ENCODE measurements at regions of chr6 and their contacts with region 1.

Region 1: GRCh38 chr6:139250296-139251044 is 41.3 kb downstream of the TXLNB start:
- DNase-seq: peak; percentile 7 to 45 (median 34)
- ATAC-seq: peak; percentile 90
- H3K4me3 ChIP-seq: no peak overlapping the region
- H3K4me3 Mint-ChIP-seq: peak overlapping the region in 6 of 10 donors; percentile 16 to 85 (median 58)
- H3K27ac ChIP-seq: no peak overlapping the region
- H3K27ac Mint-ChIP-seq: peak overlapping the region; percentile 32 to 97 (median 73)
- H3K4me1 ChIP-seq: peaks cover 21 to 23% of the 10 kb centered on the region in 2 donors
- H3K4me1 Mint-ChIP-seq: peaks cover 23 to 48% (median 46%) of the 10 kb centered on the region in 7 donors
- H3K27me3 ChIP-seq: no peaks in the 10 kb centered on the region
- H3K27me3 Mint-ChIP-seq: no peaks in the 10 kb centered on the region

Region 2: GRCh38 chr6:139219271-139219729 is 31.2 kb before region 1 on chr6:
- CTCF ChIA-PET with region 1: interaction called, 4 read pairs
- POLR2A ChIA-PET with region 1: no interaction called
- intact Hi-C with region 1: loop called (anchors 1 kb)
- DNase-seq: peak; percentile 39 to 76 (median 60)
- ATAC-seq: peak; percentile 100
- H3K4me3 ChIP-seq: no peak overlapping the region
- H3K4me3 Mint-ChIP-seq: peak overlapping the region in 8 of 10 donors; percentile 41 to 68 (median 58)
- H3K27ac ChIP-seq: no peak overlapping the region
- H3K27ac Mint-ChIP-seq: peak overlapping the region; percentile 49 to 92 (median 78)
- H3K4me1 ChIP-seq: peaks cover 5 to 10% of the 10 kb centered on the region in 2 donors
- H3K4me1 Mint-ChIP-seq: peaks cover 6 to 20% (median 12%) of the 10 kb centered on the region in 7 donors
- H3K27me3 ChIP-seq: no peaks in the 10 kb centered on the region
- H3K27me3 Mint-ChIP-seq: no peaks in the 10 kb centered on the region

Region 3: DNA sequence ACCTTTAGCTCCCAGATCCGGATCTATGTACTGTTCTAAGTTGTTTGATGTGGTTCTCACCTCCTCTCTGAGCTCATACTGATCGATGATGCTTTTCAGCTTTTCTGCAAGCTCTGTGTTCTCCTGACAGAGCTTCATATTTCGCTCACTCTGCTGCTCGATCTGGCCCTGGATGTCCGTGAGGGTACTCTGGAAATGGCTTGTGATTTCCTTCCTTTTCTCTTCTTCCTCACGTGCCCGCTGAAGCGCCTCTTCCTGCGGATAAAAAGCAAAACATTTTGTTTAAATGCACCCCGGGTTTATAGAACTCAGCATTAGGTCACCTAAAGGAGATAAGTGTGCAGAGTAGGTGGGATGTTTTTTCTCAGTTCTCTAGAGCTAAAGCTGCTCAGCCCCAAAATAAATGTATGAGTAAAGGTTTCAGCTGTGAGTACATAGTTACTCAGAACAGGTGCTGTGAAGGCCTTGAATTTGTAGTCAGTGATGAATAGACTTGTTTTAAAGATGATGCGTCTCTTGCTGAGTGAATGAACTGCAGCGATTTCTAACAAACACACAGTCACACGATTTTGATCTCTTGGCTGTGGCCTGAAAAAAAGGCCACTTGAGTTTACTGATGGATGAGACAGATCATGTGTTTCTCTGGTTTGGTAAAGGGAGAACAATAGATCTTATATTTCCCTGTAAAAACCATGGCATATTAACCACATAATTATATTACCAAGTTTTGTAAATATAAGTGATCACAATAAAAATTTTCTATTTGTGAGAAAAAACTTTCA is 12.2 kb after region 1 on chr6:
- CTCF ChIA-PET with region 1: interaction called, 3 read pairs
- POLR2A ChIA-PET with region 1: interaction called, 5 read pairs
- intact Hi-C with region 1: loop called (anchors 1 to 2 kb)
- DNase-seq: peak in 8 of 9 donors; percentile 24 to 56 (median 38)
- ATAC-seq: peak; percentile 85
- H3K4me3 ChIP-seq: peak overlapping the region; percentile 34
- H3K4me3 Mint-ChIP-seq: peak overlapping the region; percentile 45 to 85 (median 77)
- H3K27ac ChIP-seq: peak overlapping the region; percentile 14
- H3K27ac Mint-ChIP-seq: peak overlapping the region; percentile 62 to 89 (median 83)
- H3K4me1 ChIP-seq: peaks cover 7 to 10% of the 10 kb centered on the region in 2 donors
- H3K4me1 Mint-ChIP-seq: peaks cover 17 to 33% (median 25%) of the 10 kb centered on the region in 7 donors
- H3K27me3 ChIP-seq: no peaks in the 10 kb centered on the region
- H3K27me3 Mint-ChIP-seq: no peaks in the 10 kb centered on the region

Region 4: DNA sequence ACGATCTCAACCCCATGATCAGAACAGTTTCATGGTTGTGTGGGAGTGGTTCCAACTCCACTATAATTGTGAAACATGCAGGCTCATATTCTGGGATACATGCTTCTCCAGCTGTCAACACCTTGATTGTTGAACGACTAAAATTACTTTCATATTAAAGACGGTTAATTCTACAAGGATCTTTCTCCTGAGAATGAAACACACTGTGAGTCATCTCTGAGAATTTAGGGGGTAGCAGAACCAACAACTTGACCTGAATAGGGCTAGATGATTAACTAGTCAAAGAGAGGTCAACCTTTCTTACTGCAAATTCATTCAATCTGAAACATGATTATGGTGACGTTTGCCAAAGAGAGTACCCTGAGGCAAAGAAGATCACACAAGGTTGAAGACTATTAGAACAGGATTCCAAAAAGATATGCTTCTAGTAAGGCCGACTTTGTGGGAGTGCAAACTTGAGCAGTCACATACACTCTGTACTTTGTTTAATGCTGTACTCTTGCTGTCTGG is 299.1 kb after region 1 on chr6:
- CTCF ChIA-PET with region 1: no interaction called
- POLR2A ChIA-PET with region 1: no interaction called
- intact Hi-C with region 1: no loop called
- DNase-seq: no peak
- ATAC-seq: no peak
- H3K4me3 ChIP-seq: no peak overlapping the region
- H3K4me3 Mint-ChIP-seq: no peak overlapping the region
- H3K27ac ChIP-seq: no peak overlapping the region
- H3K27ac Mint-ChIP-seq: no peak overlapping the region
- H3K4me1 ChIP-seq: peaks cover 0 to 4% of the 10 kb centered on the region in 2 donors
- H3K4me1 Mint-ChIP-seq: peaks cover 0 to 14% (median 0%) of the 10 kb centered on the region in 7 donors
- H3K27me3 ChIP-seq: no peaks in the 10 kb centered on the region
- H3K27me3 Mint-ChIP-seq: peaks cover 0 to 9% (median 5%) of the 10 kb centered on the region in 5 donors

Measured in naive thymus-derived CD4-positive, alpha-beta T cell (primary cell).